Caco-2 (cell line): ENCODE measurements at regions of chr4 and their contacts with region 1.

Region 1: DNA sequence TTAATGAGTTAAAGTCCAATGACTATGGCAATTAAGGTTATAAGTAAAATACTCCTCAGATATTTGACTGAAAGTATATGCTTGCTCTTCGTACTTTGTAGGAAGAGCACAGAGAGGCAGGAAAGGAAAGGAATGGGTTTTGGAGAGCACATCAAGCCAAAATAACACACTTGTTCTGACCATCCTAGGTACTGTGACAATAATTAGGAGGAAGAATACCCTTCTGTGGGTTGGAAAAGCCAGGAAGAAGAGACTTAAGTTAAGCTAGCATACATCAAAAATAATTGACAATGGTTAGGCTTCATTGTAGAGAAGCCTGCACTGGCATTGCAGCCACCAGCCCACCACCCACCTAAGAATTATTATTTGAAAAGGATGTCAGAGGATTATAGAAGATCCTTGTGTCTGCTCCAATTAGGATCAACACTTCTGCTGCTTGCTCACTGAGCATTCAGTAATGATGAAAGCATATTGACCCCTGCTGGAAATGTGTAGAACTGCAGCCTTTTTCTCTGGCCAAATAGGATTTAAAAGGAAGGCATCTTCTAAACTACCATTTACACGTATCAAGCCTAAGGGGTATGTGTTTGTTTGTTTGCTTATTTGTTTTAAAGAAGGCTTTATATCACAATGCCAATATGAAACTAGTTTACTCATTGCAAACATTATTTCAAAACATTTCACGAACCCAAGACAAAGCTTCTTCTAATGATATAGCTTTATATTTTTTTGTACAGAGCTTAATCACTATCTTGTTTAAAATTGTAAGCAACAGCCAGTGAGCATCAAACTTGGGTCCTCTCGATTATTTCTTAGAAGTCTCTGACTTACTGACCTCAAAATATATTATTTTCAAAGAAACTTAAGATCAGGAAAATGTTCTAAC is 286.2 kb upstream of the TET2 start:
- DNase-seq: peak; percentile 47 to 66
- H3K4me3 ChIP-seq: no peak overlapping the region
- H3K4me3 Mint-ChIP-seq: no peak overlapping the region
- H3K27ac Mint-ChIP-seq: no peak overlapping the region
- H3K4me1 ChIP-seq: no peaks in the 10 kb centered on the region
- H3K4me1 Mint-ChIP-seq: no peaks in the 10 kb centered on the region
- H3K27me3 ChIP-seq: no peaks in the 10 kb centered on the region
- H3K27me3 Mint-ChIP-seq: peaks cover 2% of the 10 kb centered on the region
- CTCF ChIP-seq: peak; percentile 73 to 80

Region 2: DNA sequence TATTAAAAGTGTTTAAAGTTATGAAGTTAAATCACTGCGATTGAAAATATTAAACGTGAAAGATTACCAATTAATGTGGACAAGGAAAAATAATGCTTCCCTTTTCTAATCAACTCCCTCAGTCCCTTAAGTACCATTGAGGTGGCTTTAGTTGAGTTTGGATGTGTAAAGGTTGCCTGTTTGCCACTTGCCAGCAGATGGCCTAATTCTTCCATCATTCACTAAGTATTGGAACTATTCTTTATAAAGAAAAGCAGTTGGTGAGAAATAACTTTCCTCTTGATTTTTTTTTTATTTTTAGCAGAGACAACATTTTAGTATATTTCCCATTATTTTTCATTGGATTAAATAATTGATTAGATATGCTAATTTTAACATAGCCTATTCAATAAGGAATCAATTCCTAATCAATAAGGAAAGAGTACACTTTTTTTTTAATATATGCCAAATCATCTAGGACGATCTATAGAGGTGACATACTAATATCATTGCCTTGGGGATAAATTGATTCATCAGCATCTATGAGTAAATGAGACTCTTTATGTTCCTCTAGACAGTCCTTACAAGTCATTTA is 844.7 kb before region 1 on chr4:
- CTCF ChIA-PET with region 1: no interaction called
- POLR2A ChIA-PET with region 1: no interaction called
- intact Hi-C with region 1: loop called (anchors 1 kb)
- DNase-seq: no peak
- H3K4me3 ChIP-seq: no peak overlapping the region
- H3K4me3 Mint-ChIP-seq: no peak overlapping the region
- H3K27ac Mint-ChIP-seq: no peak overlapping the region
- H3K4me1 ChIP-seq: no peaks in the 10 kb centered on the region
- H3K4me1 Mint-ChIP-seq: no peaks in the 10 kb centered on the region
- H3K27me3 ChIP-seq: no peaks in the 10 kb centered on the region
- H3K27me3 Mint-ChIP-seq: peaks cover 3% of the 10 kb centered on the region
- CTCF ChIP-seq: peak; percentile 13 to 39

Region 3: GRCh38 chr4:104416725-104417356 is 443.6 kb before region 1 on chr4:
- CTCF ChIA-PET with region 1: no interaction called
- POLR2A ChIA-PET with region 1: no interaction called
- intact Hi-C with region 1: loop called (anchors 1 kb)
- DNase-seq: no peak
- H3K4me3 ChIP-seq: no peak overlapping the region
- H3K4me3 Mint-ChIP-seq: no peak overlapping the region
- H3K27ac Mint-ChIP-seq: no peak overlapping the region
- H3K4me1 ChIP-seq: no peaks in the 10 kb centered on the region
- H3K4me1 Mint-ChIP-seq: no peaks in the 10 kb centered on the region
- H3K27me3 ChIP-seq: no peaks in the 10 kb centered on the region
- H3K27me3 Mint-ChIP-seq: no peaks in the 10 kb centered on the region
- CTCF ChIP-seq: no peak

Region 4: GRCh38 chr4:104693599-104694201 is 166.8 kb before region 1 on chr4:
- CTCF ChIA-PET with region 1: no interaction called
- POLR2A ChIA-PET with region 1: no interaction called
- intact Hi-C with region 1: loop called (anchors 1 kb)
- DNase-seq: peak in 1 of 2 experiments; percentile 6
- H3K4me3 ChIP-seq: no peak overlapping the region
- H3K4me3 Mint-ChIP-seq: no peak overlapping the region
- H3K27ac Mint-ChIP-seq: no peak overlapping the region
- H3K4me1 ChIP-seq: no peaks in the 10 kb centered on the region
- H3K4me1 Mint-ChIP-seq: no peaks in the 10 kb centered on the region
- H3K27me3 ChIP-seq: no peaks in the 10 kb centered on the region
- H3K27me3 Mint-ChIP-seq: no peaks in the 10 kb centered on the region
- CTCF ChIP-seq: peak in 1 of 2 experiments; percentile 16

Region 5: DNA sequence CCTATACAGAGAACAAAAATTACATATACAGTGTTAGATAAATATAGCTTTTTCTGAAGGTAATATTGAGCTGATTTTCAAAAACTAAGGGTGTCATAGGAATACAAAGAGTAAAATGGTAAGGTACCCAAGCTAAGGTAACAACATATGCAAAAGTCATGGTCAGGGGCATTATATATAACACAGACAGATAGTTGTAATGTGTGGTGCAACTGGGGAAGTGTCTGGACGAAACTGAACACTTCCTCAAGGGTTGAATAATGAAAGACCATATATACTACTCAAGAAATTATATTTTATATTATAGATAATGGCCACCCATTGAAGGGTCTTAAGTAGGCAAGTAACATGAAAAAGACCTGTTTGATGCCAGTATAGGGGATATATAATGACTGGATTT is 103.6 kb before region 1 on chr4:
- CTCF ChIA-PET with region 1: no interaction called
- POLR2A ChIA-PET with region 1: no interaction called
- intact Hi-C with region 1: no loop called
- DNase-seq: no peak
- H3K4me3 ChIP-seq: no peak overlapping the region
- H3K4me3 Mint-ChIP-seq: no peak overlapping the region
- H3K27ac Mint-ChIP-seq: no peak overlapping the region
- H3K4me1 ChIP-seq: no peaks in the 10 kb centered on the region
- H3K4me1 Mint-ChIP-seq: no peaks in the 10 kb centered on the region
- H3K27me3 ChIP-seq: no peaks in the 10 kb centered on the region
- H3K27me3 Mint-ChIP-seq: no peaks in the 10 kb centered on the region
- CTCF ChIP-seq: no peak

Region 6: GRCh38 chr4:105061136-105061696 is 200.7 kb after region 1 on chr4:
- CTCF ChIA-PET with region 1: no interaction called
- POLR2A ChIA-PET with region 1: no interaction called
- intact Hi-C with region 1: no loop called
- DNase-seq: no peak
- H3K4me3 ChIP-seq: no peak overlapping the region
- H3K4me3 Mint-ChIP-seq: no peak overlapping the region
- H3K27ac Mint-ChIP-seq: no peak overlapping the region
- H3K4me1 ChIP-seq: no peaks in the 10 kb centered on the region
- H3K4me1 Mint-ChIP-seq: peaks cover 6% of the 10 kb centered on the region
- H3K27me3 ChIP-seq: no peaks in the 10 kb centered on the region; the same call in 1 of the 2 replicates
- H3K27me3 Mint-ChIP-seq: no peaks in the 10 kb centered on the region
- CTCF ChIP-seq: no peak